ENCODE measurements at regions of chr19 and their contacts with region 1.

Region 1: DNA sequence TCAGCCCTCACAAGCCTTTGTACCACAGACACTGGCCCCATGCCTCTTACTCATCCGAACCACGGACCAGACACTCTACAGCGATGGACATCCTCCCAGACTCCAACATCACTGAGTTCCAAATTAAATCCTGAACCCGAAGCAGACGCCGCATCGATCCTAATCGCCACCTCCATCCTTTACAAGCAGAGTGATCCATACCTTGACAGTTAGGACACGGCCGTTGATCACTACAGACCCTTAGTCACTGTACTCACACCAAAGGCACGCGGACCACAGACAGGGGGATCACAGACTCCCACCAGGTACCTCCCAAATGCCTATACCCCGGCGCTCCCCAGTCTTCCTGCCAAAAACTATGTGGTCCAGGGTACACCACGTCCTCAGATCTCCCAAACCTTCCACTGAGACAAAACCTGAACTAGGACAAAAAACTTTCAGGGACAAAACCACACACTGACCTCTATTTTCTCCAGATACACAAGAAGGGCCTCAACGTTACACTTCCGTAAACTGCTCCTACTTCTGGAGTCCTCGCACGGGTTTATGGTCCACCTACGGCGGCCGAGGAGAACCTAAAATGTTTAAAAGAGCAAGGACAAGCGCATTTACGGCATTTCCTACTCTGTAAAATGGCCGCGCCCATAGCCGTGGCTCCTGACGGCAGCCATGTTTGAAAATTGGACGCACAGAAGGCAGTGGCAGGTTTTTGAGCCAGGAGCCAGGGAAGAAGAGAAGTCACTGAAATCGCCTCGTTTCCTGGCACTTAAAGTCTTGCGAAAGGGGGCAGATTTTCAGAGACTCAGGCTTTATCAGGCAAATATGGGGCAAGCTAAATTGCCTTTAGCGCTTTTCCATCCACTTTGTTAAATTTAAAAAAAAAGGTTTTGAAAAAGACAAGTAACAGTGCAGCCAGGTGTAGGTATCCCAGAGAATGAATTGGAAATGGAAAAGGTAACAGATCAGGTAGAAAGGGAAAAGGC is at the start of gene ZNF350:
- DNase-seq: peak; percentile 87 to 91
- ATAC-seq: peak; percentile 100
- H3K4me3 ChIP-seq: peak within 1 kb of the TSS; percentile 69 to 92 (median 86)
- H3K27ac ChIP-seq: peak within 1 kb of the TSS; percentile 74 to 79 (median 77)
- H3K4me1 ChIP-seq: peaks cover 8 to 9% of the 10 kb centered on the region in 2 donors
- H3K27me3 ChIP-seq: no peaks in the 10 kb centered on the region
- CTCF ChIP-seq: no peak
- POLR2A ChIP-seq: peak in 1 of 2 donors; percentile 21
- total RNA-seq, gene ZNF350: 1.7 to 6.0 (median 5.0) TPM

Region 2: GRCh38 chr19:52007806-52008557 is 21.4 kb after region 1 on chr19 and contains the start of gene ZNF615:
- in situ Hi-C with region 1: no loop called
- intact Hi-C with region 1: loop called (anchors 1 kb)
- DNase-seq: peak; percentile 77 to 81
- ATAC-seq: peak; percentile 94 to 98
- H3K4me3 ChIP-seq: peak within 1 kb of the TSS; percentile 82 to 97 (median 88)
- H3K27ac ChIP-seq: peak within 1 kb of the TSS; percentile 75 to 86 (median 82)
- H3K4me1 ChIP-seq: peaks cover 0 to 5% of the 10 kb centered on the region in 2 donors
- H3K27me3 ChIP-seq: no peaks in the 10 kb centered on the region
- CTCF ChIP-seq: no peak
- POLR2A ChIP-seq: peak; percentile 10 to 14
- total RNA-seq, gene ZNF615: 5.6 to 8.9 (median 7.4) TPM

Measured in gastrocnemius medialis (tissue), 4 donors.